Activated T-helper 2 cell treated with anti-CD3 and anti-CD28 coated beads, Interferon-gamma antibody, Interleukin-2, Interleukin-4, amounts not matched to agents 10 μg/mL and 5 μg/mL and 100 μg/mL, durations not matched to agents 14 hours and 24 hours and 36 hours (primary cell): ENCODE measurements at regions of chr2 and their contacts with region 1.

Region 1: DNA sequence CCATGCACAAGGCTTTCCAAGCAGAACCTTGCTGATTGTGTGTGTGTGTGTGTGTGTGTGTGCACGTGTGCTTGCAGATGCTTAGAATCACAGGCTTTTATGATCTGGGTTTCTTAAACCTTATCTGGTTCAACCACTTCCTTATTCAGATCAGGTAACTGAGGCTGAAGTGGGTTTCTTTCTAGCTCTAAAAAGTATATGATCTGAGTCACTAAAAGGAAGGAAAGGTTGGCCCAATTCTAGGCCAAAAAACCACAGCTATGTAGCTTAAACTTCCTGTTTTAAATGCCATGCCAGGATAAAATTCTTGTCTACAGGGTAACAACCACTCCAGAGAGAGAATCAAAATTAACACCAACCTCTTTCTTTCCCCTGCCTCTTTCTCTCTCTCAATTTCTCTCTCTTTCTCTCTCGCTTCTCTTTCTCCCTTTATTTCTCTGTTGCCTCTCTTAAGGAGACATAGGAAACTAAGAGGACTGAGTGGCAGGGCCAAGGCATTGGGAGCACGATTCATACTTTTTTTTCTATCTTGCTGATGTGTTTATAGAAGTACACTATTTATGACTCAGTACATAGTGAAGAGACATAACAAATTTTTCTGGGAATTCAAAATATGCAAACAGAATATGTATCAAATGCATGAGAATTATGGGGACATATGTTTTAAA is 140.3 kb downstream of the TRIB2 start:
- DNase-seq: peak; percentile 28
- H3K4me3 Mint-ChIP-seq: no peak overlapping the region
- H3K27ac Mint-ChIP-seq: no peak overlapping the region
- H3K4me1 Mint-ChIP-seq: peaks cover 20% of the 10 kb centered on the region
- H3K27me3 Mint-ChIP-seq: peaks cover 3% of the 10 kb centered on the region

Region 2: DNA sequence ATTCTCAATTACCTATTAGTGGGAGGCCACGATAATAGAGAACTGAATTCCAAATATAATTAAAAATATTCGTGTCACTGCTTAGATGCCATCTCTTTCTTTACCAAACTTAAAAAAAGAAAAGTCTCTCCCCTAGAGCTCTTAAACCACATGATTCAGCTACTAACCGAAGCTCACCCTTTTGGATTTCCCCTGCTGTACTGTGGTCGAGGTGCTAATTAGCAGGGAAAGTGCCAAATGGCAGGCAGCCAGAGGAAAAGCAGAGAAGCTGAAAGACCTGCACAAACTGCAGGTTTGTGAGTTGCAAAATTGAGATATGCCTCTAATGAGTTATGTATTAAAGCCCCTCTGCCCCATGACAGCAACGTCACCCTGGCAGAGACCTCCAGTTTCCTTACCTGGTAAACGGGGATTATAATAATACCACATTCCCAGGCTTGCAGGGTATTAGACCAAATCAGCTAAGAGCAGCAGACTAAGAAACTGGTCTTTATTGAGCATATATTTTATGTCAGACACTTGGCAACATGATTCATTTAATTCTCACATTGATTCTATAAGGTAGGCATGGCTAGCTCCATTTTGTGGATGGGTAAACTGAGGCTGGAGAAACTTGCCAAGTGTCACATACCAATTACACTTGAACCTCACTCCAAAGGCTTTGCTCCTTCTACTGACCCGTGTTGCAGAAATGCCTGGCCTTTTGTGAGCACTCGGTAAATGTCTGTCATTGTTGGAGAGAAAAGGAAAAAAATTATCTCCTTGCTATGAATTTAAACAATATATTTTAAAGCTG is 851.0 kb before region 1 on chr2:
- intact Hi-C with region 1: loop called (anchors 5 kb)
- DNase-seq: peak; percentile 24
- H3K4me3 Mint-ChIP-seq: no peak overlapping the region
- H3K27ac Mint-ChIP-seq: no peak overlapping the region
- H3K4me1 Mint-ChIP-seq: peaks cover 10% of the 10 kb centered on the region
- H3K27me3 Mint-ChIP-seq: peaks cover 40% of the 10 kb centered on the region

Region 3: GRCh38 chr2:12155303-12156051 is 701.6 kb before region 1 on chr2:
- intact Hi-C with region 1: no loop called
- DNase-seq: no peak
- H3K4me3 Mint-ChIP-seq: no peak overlapping the region
- H3K27ac Mint-ChIP-seq: no peak overlapping the region
- H3K4me1 Mint-ChIP-seq: no peaks in the 10 kb centered on the region
- H3K27me3 Mint-ChIP-seq: peaks cover 20% of the 10 kb centered on the region

Region 4: GRCh38 chr2:12456293-12457151 is 400.5 kb before region 1 on chr2:
- intact Hi-C with region 1: no loop called
- DNase-seq: peak; percentile 54
- H3K4me3 Mint-ChIP-seq: peak overlapping the region; percentile 61
- H3K27ac Mint-ChIP-seq: peak overlapping the region; percentile 74
- H3K4me1 Mint-ChIP-seq: peaks cover 42% of the 10 kb centered on the region
- H3K27me3 Mint-ChIP-seq: no peaks in the 10 kb centered on the region

Region 5: DNA sequence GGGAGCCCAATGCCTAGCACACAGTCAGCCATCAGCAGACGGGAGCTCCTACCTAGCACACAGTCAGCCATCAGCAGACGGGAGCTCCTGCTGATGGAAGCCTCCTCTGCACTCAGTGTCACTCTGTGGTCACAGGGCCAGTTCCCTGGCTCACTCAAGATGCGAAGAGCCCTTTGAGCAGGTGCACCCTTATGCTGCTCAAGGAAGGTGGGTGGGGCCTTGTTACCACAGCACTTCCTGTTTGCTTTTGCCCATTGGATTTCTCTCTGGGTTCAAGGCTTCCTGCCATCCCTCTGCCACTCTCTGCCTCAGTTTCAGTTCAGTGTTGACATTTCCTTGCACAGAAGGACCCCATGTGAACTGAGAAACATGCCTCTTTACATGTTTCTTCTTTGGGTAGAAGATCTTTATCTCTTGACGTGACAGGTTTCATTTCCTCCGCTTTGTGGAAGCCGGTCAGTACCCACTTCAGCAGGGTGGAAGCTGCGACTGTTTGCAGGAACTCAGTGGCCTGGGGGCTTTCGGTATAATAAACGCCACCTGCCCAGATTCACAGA is 128.8 kb before region 1 on chr2:
- intact Hi-C with region 1: loop called (anchors 2 kb)
- DNase-seq: peak; percentile 75
- H3K4me3 Mint-ChIP-seq: peak overlapping the region; percentile 45
- H3K27ac Mint-ChIP-seq: peak overlapping the region; percentile 25
- H3K4me1 Mint-ChIP-seq: peaks cover 56% of the 10 kb centered on the region
- H3K27me3 Mint-ChIP-seq: no peaks in the 10 kb centered on the region

Region 6: GRCh38 chr2:12867631-12868287 is 10.7 kb after region 1 on chr2:
- intact Hi-C with region 1: no loop called
- DNase-seq: no peak
- H3K4me3 Mint-ChIP-seq: no peak overlapping the region
- H3K27ac Mint-ChIP-seq: no peak overlapping the region
- H3K4me1 Mint-ChIP-seq: no peaks in the 10 kb centered on the region
- H3K27me3 Mint-ChIP-seq: peaks cover 36% of the 10 kb centered on the region

Region 7: GRCh38 chr2:12948961-12949353 is 91.9 kb after region 1 on chr2:
- intact Hi-C with region 1: loop called (anchors 5 kb)
- DNase-seq: no peak
- H3K4me3 Mint-ChIP-seq: no peak overlapping the region
- H3K27ac Mint-ChIP-seq: no peak overlapping the region
- H3K4me1 Mint-ChIP-seq: peaks cover 35% of the 10 kb centered on the region
- H3K27me3 Mint-ChIP-seq: peaks cover 51% of the 10 kb centered on the region